CD4-positive, alpha-beta T cell (primary cell): ENCODE measurements at regions of chr9 and their contacts with region 1.

Region 1: DNA sequence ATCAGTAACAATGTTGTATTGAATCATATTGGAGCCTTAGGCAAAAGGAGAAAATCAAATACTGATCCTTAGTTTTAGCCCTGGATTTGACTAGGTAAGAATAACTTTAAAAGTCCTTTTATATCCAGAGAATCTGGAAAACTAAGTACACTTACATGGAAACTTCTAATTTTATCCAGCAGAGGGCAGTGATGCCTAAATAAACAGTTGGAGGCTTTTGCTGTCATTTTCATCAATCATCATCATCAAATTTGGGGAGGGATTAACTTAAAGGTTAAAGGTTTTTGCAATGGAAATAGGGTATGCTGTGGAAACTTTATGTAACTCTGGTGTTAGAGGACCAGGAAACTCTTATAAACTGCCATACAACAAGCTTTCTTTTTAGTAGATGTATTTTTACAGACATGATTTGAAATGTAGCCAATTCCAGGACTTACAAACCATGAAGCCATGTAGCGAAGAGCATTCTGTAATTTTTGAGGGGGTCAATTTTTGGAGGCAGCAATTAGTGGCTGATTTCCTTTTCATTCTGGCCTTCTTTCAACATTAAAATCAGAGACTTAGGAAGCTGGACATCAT is 112.7 kb downstream of the OSTF1 start:
- DNase-seq: peak in 3 of 14 experiments; percentile 59 to 66 (median 64)
- ATAC-seq: no peak
- H3K4me3 ChIP-seq: no peak overlapping the region
- H3K4me3 Mint-ChIP-seq: no peak overlapping the region
- H3K27ac ChIP-seq: no peak overlapping the region
- H3K27ac Mint-ChIP-seq: no peak overlapping the region
- H3K4me1 ChIP-seq: no peaks in the 10 kb centered on the region
- H3K4me1 Mint-ChIP-seq: no peaks in the 10 kb centered on the region
- H3K27me3 ChIP-seq: no peaks in the 10 kb centered on the region
- H3K27me3 Mint-ChIP-seq: no peaks in the 10 kb centered on the region
- CTCF ChIP-seq: peak; percentile 73

Region 2: GRCh38 chr9:75226403-75227139 is 25.6 kb after region 1 on chr9:
- CTCF ChIA-PET with region 1: no interaction called
- POLR2A ChIA-PET with region 1: no interaction called
- intact Hi-C with region 1: no loop called
- DNase-seq: no peak
- ATAC-seq: no peak
- H3K4me3 ChIP-seq: no peak overlapping the region
- H3K4me3 Mint-ChIP-seq: no peak overlapping the region
- H3K27ac ChIP-seq: no peak overlapping the region
- H3K27ac Mint-ChIP-seq: no peak overlapping the region
- H3K4me1 ChIP-seq: no peaks in the 10 kb centered on the region
- H3K4me1 Mint-ChIP-seq: no peaks in the 10 kb centered on the region
- H3K27me3 ChIP-seq: no peaks in the 10 kb centered on the region
- H3K27me3 Mint-ChIP-seq: no peaks in the 10 kb centered on the region
- CTCF ChIP-seq: no peak

Region 3: DNA sequence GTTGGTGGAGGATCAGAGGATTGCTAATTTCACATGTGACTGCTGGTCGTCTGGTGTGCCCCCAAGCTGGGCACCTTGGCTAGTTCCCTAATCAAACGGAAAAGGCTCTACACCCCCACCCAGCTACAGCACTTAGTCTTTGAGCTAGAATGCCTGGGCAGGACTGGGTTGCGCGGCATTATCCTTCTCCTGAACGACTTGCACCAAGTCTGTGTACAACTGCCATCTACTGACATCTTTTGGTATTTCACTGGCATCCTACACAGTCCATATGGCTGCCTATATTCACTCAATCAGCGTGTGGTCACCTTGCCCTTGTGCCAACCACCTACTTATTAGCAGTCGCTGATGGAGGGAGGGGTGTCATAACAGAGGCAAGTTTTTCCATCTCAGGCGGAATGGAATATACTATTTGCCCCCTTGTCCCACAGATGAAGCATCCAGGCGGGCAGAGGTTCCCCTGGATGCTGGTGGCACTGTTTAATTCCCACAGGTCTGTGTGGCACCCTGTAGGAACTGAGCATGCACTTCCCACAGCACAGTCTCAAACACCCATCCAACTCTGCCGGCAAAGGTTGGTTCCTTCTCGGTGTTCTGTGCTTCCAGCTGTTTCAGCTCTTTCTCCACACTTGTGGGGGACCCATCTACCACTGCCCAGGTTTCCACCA is 37.5 kb after region 1 on chr9:
- CTCF ChIA-PET with region 1: interaction called, 3 read pairs
- POLR2A ChIA-PET with region 1: no interaction called
- intact Hi-C with region 1: loop called (anchors 1 to 2 kb)
- DNase-seq: peak in 12 of 14 experiments; percentile 6 to 71 (median 32)
- ATAC-seq: peak; percentile 96
- H3K4me3 ChIP-seq: no peak overlapping the region
- H3K4me3 Mint-ChIP-seq: no peak overlapping the region
- H3K27ac ChIP-seq: no peak overlapping the region
- H3K27ac Mint-ChIP-seq: no peak overlapping the region
- H3K4me1 ChIP-seq: peaks cover 3% of the 10 kb centered on the region
- H3K4me1 Mint-ChIP-seq: no peaks in the 10 kb centered on the region
- H3K27me3 ChIP-seq: no peaks in the 10 kb centered on the region
- H3K27me3 Mint-ChIP-seq: no peaks in the 10 kb centered on the region
- CTCF ChIP-seq: peak; percentile 73